ENCODE measurements at regions of chr22 and their contacts with region 1.

Region 1: DNA sequence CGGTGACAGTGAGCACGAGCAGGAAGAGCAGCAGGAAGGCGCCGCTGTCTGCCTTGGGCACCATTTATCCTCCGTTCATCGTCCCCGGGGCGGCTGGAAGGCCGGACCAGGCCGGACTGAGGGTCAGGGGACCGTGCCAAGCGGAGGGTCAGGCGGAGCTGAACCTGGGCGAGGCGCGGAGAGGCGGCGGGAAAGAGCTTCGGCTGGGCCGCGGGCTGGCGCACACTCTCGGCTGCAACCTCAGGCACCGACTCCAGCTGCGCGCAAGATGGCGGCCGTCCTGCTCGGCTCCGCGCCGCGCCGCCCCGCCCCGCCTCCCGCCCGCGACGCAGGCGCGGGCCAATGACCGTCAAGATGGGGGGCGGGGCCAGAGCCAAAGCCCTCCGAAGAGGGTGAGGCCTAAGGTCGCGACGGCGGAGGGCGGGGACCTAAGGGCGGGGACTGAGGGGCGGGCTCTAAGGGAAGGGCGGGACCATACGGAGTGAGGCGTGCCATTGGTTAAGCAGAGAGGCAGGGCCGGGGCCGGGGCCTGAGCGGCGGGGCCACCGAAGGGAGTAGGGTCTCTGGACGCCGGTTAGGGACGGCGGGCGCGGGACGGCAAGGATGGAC is at the start of gene DGCR2:
- DNase-seq: peak; percentile 98
- H3K4me3 Mint-ChIP-seq: peak within 1 kb of the TSS; percentile 84
- H3K27ac Mint-ChIP-seq: peak within 1 kb of the TSS; percentile 66
- H3K4me1 Mint-ChIP-seq: peaks cover 47% of the 10 kb centered on the region
- H3K27me3 Mint-ChIP-seq: no peaks in the 10 kb centered on the region
- total RNA-seq, gene DGCR2: 15.4 to 16.4 TPM

Region 2: DNA sequence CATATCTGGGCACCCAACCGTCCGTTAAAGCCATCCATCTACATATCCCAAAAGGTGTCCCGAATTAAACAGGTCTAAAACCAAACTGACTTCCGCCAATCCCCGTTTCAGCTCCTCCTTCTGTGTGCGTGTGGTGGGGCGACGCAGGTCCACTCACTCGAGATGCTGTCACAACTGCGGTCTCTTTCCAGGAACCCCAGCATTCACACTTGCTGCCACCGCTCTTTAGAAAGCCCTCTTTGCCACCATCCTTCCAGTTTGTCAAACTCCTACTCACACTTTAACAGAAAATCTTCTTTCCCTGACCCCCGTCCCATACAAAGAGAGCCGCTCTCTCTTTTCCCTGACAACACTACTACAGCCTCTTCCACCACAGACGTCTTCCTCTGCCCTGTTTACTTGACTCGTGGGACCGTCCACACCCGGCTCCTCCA is 21.7 kb after region 1 on chr22:
- CTCF ChIA-PET with region 1: interaction called, 6 read pairs
- intact Hi-C with region 1: loop called (anchors 1 kb)
- DNase-seq: peak; percentile 50
- H3K4me3 Mint-ChIP-seq: peak overlapping the region; percentile 99
- H3K27ac Mint-ChIP-seq: peak overlapping the region; percentile 91
- H3K4me1 Mint-ChIP-seq: peaks cover 19% of the 10 kb centered on the region
- H3K27me3 Mint-ChIP-seq: peaks cover 13% of the 10 kb centered on the region

Region 3: GRCh38 chr22:19228179-19228578 is 105.9 kb after region 1 on chr22:
- CTCF ChIA-PET with region 1: no interaction called
- intact Hi-C with region 1: no loop called
- DNase-seq: no peak
- H3K4me3 Mint-ChIP-seq: no peak overlapping the region
- H3K27ac Mint-ChIP-seq: no peak overlapping the region
- H3K4me1 Mint-ChIP-seq: no peaks in the 10 kb centered on the region
- H3K27me3 Mint-ChIP-seq: peaks cover 2% of the 10 kb centered on the region

Region 4: GRCh38 chr22:19291580-19292457 is 169.6 kb after region 1 on chr22 and contains the start of gene CLTCL1:
- CTCF ChIA-PET with region 1: no interaction called
- intact Hi-C with region 1: loop called (anchors 1 kb)
- DNase-seq: peak; percentile 69
- H3K4me3 Mint-ChIP-seq: peak within 1 kb of the TSS; percentile 87
- H3K27ac Mint-ChIP-seq: peak within 1 kb of the TSS; percentile 73
- H3K4me1 Mint-ChIP-seq: peaks cover 13% of the 10 kb centered on the region
- H3K27me3 Mint-ChIP-seq: peaks cover 15% of the 10 kb centered on the region
- total RNA-seq, gene CLTCL1: 0.57 to 1.0 TPM

Region 5: GRCh38 chr22:20000169-20000621 is 877.9 kb after region 1 on chr22:
- CTCF ChIA-PET with region 1: no interaction called
- intact Hi-C with region 1: no loop called
- DNase-seq: no peak
- H3K4me3 Mint-ChIP-seq: no peak overlapping the region
- H3K27ac Mint-ChIP-seq: no peak overlapping the region
- H3K4me1 Mint-ChIP-seq: no peaks in the 10 kb centered on the region
- H3K27me3 Mint-ChIP-seq: no peaks in the 10 kb centered on the region

Measured in activated naive CD4-positive, alpha-beta T cell treated with anti-CD3 and anti-CD28 coated beads for 36 hours (primary cell).